ENCODE measurements at regions of chr11 and their contacts with region 1.

Region 1: DNA sequence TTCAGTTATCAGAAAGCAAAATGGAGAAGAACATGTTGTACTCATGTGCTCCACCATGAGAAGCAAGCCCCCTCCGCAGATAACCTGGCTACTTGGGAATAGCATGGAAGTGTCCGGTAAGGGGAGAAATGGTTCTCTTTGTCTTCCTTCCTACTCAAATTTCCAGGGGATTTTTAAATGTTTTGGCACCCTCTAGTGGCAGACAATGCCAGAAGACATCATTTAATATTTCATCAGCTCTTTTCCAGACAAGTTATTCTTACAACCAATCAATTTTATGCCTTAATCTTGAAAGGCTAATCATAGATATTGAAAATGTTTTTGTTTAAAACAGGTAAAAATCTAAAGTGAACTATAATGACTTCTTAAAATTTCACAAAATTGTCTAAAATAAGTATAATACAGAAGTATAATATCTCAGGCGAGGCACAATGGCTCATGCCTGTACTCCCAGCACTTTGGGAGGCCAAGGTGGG is 15.7 kb downstream of the CRTAM start:
- DNase-seq: peak; percentile 78
- H3K4me3 ChIP-seq: no peak overlapping the region
- H3K27ac ChIP-seq: no peak overlapping the region
- H3K4me1 ChIP-seq: no peaks in the 10 kb centered on the region
- H3K27me3 ChIP-seq: peaks cover 0 to 3% of the 10 kb centered on the region in 2 experiments
- CTCF ChIP-seq: peak; percentile 47 to 63
- POLR2A ChIP-seq: no peak

Region 2: DNA sequence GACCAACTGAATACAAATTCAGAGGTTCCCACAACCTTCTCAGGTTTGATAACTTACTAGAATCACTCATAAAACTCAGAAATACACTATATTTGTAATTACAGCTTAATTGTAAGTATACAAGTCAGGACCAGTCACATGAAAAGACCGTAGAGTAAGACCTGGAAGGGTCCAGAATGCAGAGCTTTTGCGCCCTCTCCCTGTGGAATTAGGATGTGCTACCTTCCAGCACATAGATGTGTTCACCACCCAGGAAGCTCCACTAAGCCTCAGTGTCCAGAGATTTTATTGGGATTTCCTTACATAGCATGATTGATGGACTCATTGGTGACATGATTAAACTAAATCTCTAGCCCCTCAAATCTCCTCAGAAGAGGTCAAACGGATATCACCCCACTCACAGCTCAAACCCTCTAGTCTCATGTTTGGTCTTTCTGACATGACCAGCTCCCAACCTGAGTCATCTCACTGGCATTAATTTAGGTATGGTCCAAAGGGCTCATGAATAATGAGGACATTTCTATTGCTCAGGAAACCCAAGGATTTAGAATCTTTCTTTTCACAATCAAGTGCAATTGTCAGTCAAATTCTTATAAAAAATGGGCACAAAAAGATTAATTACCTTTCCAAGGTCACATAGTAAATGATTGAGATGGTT is 275.7 kb before region 1 on chr11:
- CTCF ChIA-PET with region 1: interaction called, 68 read pairs
- POLR2A ChIA-PET with region 1: no interaction called
- dilution Hi-C with region 1: no loop called
- intact Hi-C with region 1: loop called (anchors 1 kb)
- DNase-seq: no peak
- H3K4me3 ChIP-seq: no peak overlapping the region
- H3K27ac ChIP-seq: no peak overlapping the region
- H3K4me1 ChIP-seq: no peaks in the 10 kb centered on the region
- H3K27me3 ChIP-seq: no peaks in the 10 kb centered on the region
- CTCF ChIP-seq: no peak
- POLR2A ChIP-seq: no peak

Region 3: DNA sequence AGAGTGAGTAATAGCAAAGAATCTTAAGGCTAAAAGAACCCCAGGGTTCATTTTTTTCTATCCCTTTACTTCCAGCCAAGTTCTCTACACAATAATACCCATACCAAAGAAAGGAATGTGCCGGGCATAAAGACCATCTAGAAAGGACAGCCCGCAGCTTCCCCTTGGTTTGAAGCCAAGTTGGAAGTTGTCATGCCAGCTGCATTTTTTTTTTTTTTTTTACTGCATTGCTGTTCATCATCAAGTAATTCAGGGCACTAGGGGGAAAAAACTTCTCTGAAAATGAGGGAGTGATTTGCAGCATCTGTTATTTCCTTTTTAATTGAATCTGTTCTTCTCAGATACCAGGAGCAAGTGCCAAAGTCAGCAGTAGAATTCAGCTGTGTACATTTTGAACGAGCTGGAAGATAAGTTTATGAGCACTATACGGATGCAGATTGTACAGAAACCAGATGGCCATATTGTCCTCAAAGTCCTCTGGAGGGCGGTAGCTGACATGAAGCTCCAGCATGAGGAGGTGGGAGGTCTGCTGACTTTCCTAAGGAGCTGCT is 142.1 kb before region 1 on chr11:
- CTCF ChIA-PET with region 1: interaction called, 15 read pairs
- POLR2A ChIA-PET with region 1: no interaction called
- dilution Hi-C with region 1: no loop called
- intact Hi-C with region 1: no loop called
- DNase-seq: peak; percentile 98
- H3K4me3 ChIP-seq: no peak overlapping the region
- H3K27ac ChIP-seq: peak overlapping the region; percentile 48
- H3K4me1 ChIP-seq: peaks cover 35% of the 10 kb centered on the region
- H3K27me3 ChIP-seq: no peaks in the 10 kb centered on the region
- CTCF ChIP-seq: peak; percentile 37 to 42
- POLR2A ChIP-seq: peak; percentile 61

Region 4: DNA sequence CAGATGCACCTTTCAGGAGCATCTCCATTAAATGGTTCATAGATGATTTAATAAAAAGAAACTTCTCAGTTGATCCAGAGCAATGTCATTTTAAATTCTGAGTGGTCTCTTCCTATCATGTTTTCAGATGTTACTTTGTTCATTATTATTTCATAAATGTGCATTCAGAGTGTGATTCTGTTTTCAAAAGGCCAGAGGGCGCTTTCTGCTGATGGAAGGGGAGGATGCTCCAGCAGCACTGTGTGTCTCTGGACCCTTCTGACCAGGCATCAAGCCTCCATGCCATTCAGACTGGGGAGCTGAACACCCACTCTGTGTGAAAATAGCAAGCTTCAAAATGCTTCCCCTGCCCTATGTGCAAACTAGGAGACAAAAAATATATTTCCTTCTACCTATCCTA is 39.6 kb before region 1 on chr11:
- CTCF ChIA-PET with region 1: interaction called, 24 read pairs
- POLR2A ChIA-PET with region 1: no interaction called
- dilution Hi-C with region 1: no loop called
- intact Hi-C with region 1: loop called (anchors 1 kb)
- DNase-seq: no peak
- H3K4me3 ChIP-seq: no peak overlapping the region
- H3K27ac ChIP-seq: no peak overlapping the region
- H3K4me1 ChIP-seq: peaks cover 6% of the 10 kb centered on the region
- H3K27me3 ChIP-seq: no peaks in the 10 kb centered on the region
- CTCF ChIP-seq: no peak
- POLR2A ChIP-seq: no peak

Region 5: GRCh38 chr11:122882857-122883645 is 29.0 kb after region 1 on chr11:
- CTCF ChIA-PET with region 1: interaction called, 10 read pairs
- POLR2A ChIA-PET with region 1: no interaction called
- dilution Hi-C with region 1: no loop called
- intact Hi-C with region 1: no loop called
- DNase-seq: peak; percentile 50
- H3K4me3 ChIP-seq: peak overlapping the region; percentile 58 to 72 (median 71)
- H3K27ac ChIP-seq: peak overlapping the region; percentile 66
- H3K4me1 ChIP-seq: peaks cover 8% of the 10 kb centered on the region
- H3K27me3 ChIP-seq: peaks cover 2 to 4% of the 10 kb centered on the region in 2 experiments
- CTCF ChIP-seq: no peak
- POLR2A ChIP-seq: peak; percentile 53